ENCODE measurements at regions of chr6 and their contacts with region 1.

Region 1: GRCh38 chr6:72418495-72418894 is 203.4 kb upstream of the KCNQ5 start:
- DNase-seq: peak in 1 of 4 experiments; percentile 13
- ATAC-seq: no peak; the same call in 2 of the 3 replicates
- H3K4me3 ChIP-seq: no peak overlapping the region
- H3K27ac ChIP-seq: no peak overlapping the region
- H3K4me1 ChIP-seq: peaks cover 6 to 28% of the 10 kb centered on the region in 2 experiments; a peak in 4 of 5 replicates
- H3K27me3 ChIP-seq: no peaks in the 10 kb centered on the region
- CTCF ChIP-seq: no peak
- EP300 ChIP-seq: no peak
- POLR2A ChIP-seq: no peak
- RAD21 ChIP-seq: no peak

Region 2: GRCh38 chr6:72328775-72329174 is 89.7 kb before region 1 on chr6:
- CTCF ChIA-PET with region 1: no interaction called
- POLR2A ChIA-PET with region 1: no interaction called
- in situ Hi-C with region 1: no loop called
- intact Hi-C with region 1: no loop called
- DNase-seq: no peak
- ATAC-seq: no peak
- H3K4me3 ChIP-seq: no peak overlapping the region
- H3K27ac ChIP-seq: no peak overlapping the region
- H3K4me1 ChIP-seq: no peaks in the 10 kb centered on the region
- H3K27me3 ChIP-seq: no peaks in the 10 kb centered on the region
- CTCF ChIP-seq: no peak
- EP300 ChIP-seq: no peak
- POLR2A ChIP-seq: no peak
- RAD21 ChIP-seq: no peak

Region 3: DNA sequence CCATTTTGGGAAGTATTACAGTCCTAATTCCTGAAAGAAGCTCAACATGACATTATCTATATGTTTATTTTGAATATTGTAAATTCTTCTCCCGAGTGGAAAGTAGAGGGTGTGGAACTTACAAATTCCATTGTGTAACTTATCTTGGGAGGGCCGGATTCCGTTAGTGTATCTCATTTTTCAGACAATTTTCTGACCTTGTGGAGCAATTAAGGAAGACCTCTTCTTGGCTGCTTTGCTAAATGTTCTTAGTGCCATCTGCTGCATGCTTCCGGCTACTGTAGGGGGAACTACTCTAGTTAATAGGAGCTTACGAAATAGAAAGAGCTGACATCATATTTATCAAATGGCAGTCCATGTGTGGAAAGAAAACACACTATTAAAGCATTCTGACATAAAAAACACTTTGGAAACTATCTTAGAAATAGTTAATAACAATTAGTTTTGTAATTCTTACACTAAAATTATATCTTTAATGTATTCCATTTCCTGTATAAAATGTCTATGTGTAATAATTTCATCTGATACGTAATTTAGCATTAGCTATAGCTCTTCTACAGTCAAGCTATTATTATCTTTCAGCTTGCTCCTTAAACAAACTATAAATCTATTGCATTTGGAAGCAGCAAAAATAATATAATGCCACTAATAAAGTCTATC is 161.9 kb after region 1 on chr6:
- CTCF ChIA-PET with region 1: interaction called, 146 read pairs
- POLR2A ChIA-PET with region 1: interaction called, 3 read pairs
- in situ Hi-C with region 1: loop called (anchors 5 kb)
- intact Hi-C with region 1: no loop called
- DNase-seq: peak; percentile 44 to 88 (median 64)
- ATAC-seq: peak; percentile 99
- H3K4me3 ChIP-seq: no peak overlapping the region
- H3K27ac ChIP-seq: peak overlapping the region; percentile 24; the same call in 2 of the 3 replicates
- H3K4me1 ChIP-seq: no peaks in the 10 kb centered on the region; a peak in 1 of 5 replicates
- H3K27me3 ChIP-seq: no peaks in the 10 kb centered on the region
- CTCF ChIP-seq: peak; percentile 82 to 98 (median 95)
- EP300 ChIP-seq: no peak
- POLR2A ChIP-seq: no peak
- RAD21 ChIP-seq: peak; percentile 100

Measured in K562 (cell line).